ENCODE measurements at regions of chr17 and their contacts with region 1.

Region 1: DNA sequence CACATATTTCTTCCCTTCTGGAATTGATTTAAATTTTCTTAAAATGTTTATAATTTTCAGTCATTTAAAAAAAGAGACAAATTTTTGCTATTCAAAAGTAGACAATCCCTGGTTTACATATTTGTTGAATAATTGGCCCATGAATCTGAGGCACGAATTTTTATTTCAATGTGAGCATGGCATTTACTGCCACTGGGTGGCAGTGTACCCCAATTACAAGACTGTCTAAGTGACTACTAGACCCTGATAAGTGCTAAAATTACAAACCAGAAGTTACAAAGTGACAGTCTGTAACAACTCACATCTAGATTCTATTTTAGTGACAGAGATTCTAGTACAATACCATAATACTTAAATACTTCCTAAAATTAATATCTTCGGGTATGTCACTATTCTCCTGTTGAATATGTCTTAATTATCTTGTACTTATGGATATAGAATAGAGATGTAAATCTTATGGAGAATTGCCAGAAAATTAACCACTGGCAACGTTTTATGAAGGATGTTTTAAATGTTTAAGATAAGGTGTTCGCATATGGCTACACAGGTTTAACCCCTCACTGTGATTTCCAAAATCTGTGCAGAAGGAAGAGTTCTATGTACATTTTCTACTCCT is 235.8 kb downstream of the MAP2K4 start:
- DNase-seq: peak; percentile 55 to 75
- ATAC-seq: peak; percentile 73 to 91; a peak in 4 of 6 replicates
- H3K4me3 ChIP-seq: no peak overlapping the region
- H3K27ac ChIP-seq: peak overlapping the region; percentile 41 to 54; a peak in 5 of 6 replicates
- H3K4me1 ChIP-seq: peaks cover 9% of the 10 kb centered on the region; the same call in 2 of the 3 replicates
- CTCF ChIP-seq: peak; percentile 98
- EP300 ChIP-seq: no peak
- POLR2A ChIP-seq: no peak
- RAD21 ChIP-seq: peak; percentile 94 to 98

Region 2: DNA sequence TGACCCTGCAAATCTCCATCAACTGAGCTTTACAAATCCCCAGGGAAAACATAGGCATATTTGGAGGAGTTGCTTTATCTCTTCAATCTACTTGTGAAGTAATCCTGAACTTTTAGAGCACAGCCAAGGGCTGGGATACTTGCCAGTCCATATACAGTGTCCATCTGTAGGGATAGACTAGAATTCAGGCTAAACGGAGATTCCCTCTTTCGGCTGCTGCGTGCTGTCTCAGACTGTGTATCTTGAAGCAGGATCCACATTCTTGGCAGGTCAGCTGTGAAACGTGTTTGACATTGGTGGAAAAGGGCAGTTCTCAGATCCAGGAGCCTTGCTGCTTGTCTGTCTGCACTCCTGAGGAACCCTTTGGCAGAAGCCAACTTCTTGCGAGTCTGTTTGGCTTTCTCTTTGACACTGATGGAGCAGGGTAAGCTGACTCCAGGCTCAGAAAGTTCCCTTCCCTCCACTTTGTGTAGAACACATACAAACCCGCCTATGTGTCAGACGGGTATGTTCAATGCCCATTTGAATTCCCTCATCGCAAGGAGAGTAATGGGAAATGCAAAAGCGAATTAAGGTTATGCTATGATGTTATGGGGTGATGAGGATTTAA is 14.0 kb before region 1 on chr17:
- CTCF ChIA-PET with region 1: interaction called, 11 read pairs
- POLR2A ChIA-PET with region 1: no interaction called
- DNase-seq: no peak
- ATAC-seq: no peak; a peak in 1 of 6 replicates
- H3K4me3 ChIP-seq: no peak overlapping the region
- H3K27ac ChIP-seq: no peak overlapping the region
- H3K4me1 ChIP-seq: no peaks in the 10 kb centered on the region
- CTCF ChIP-seq: no peak
- EP300 ChIP-seq: no peak
- POLR2A ChIP-seq: no peak
- RAD21 ChIP-seq: no peak